PC-3 (cell line): ENCODE measurements at regions of chr2 and their contacts with region 1.

Region 1: GRCh38 chr2:55961318-55961911 is 37.8 kb upstream of the EFEMP1 start:
- DNase-seq: peak; percentile 75
- ATAC-seq: no peak
- H3K4me3 ChIP-seq: no peak overlapping the region
- H3K27ac ChIP-seq: no peak overlapping the region
- H3K4me1 ChIP-seq: peaks cover 35% of the 10 kb centered on the region
- H3K27me3 ChIP-seq: no peaks in the 10 kb centered on the region
- CTCF ChIP-seq: peak; percentile 88

Region 2: DNA sequence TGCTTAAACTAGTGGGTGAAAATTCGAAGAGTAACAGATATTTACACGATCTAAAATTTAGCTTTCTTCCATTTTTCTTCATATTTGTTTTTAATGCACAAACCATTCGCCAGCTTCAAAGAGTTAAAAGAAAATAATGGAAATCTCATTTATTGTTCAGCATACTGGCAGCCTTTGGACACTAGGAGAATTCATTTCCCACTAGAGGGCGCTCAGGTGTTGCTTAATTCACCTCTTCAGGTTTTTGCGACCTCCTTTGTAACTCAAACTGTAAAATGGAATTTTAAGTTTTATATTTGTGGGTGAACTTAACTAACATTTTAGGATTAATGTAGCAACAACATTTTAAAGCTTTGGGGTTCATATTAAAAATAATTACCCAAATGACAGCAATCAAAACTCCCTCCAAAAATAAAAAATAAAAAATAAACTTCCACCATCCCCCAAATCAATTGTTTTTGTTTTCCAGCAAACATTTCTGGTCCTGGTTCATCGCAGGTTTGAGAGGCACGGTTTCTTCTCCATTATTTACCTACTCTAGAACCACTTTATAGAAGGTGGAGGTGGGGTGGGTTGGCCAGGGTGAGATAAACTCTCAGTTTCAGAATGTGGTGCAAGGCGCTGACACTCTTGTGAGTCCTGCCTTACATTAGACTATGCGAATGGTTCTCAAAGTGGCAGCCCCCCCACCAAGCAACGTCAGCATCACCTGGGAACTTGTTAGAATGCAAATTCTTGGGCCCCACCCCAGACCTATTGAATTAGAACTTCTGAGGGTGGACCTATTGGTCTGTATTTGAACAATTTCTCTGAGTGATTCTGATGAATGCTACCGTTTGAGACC is 243.0 kb before region 1 on chr2:
- CTCF ChIA-PET with region 1: no interaction called
- POLR2A ChIA-PET with region 1: no interaction called
- intact Hi-C with region 1: loop called (anchors 1 kb)
- DNase-seq: peak; percentile 86
- ATAC-seq: peak; percentile 74
- H3K4me3 ChIP-seq: no peak overlapping the region
- H3K27ac ChIP-seq: no peak overlapping the region
- H3K4me1 ChIP-seq: peaks cover 22% of the 10 kb centered on the region
- H3K27me3 ChIP-seq: no peaks in the 10 kb centered on the region
- CTCF ChIP-seq: peak; percentile 93

Region 3: DNA sequence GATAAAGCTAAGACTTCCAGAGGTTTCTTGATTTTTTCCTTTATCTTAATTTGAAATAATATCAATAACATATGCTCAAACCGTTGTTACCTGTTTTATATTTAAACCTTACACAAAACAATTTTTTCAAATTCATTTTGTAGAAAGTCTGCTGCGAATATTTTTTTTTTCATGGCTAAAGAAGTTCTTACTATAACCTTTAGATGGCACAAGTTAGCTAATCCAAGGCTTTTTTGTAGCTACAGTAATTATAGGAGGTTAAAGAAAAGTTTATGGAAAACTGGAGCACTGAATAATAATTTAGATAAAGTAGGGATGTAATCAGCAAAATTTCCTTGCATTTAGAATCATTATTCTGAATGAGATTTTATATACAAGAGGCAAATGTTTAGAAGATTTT is 189.8 kb before region 1 on chr2:
- CTCF ChIA-PET with region 1: interaction called, 10 read pairs
- POLR2A ChIA-PET with region 1: no interaction called
- intact Hi-C with region 1: loop called (anchors 1 kb)
- DNase-seq: peak; percentile 71
- ATAC-seq: peak; percentile 54; the same call in 1 of the 2 replicates
- H3K4me3 ChIP-seq: no peak overlapping the region
- H3K27ac ChIP-seq: no peak overlapping the region
- H3K4me1 ChIP-seq: peaks cover 7% of the 10 kb centered on the region
- H3K27me3 ChIP-seq: no peaks in the 10 kb centered on the region
- CTCF ChIP-seq: peak; percentile 92

Region 4: DNA sequence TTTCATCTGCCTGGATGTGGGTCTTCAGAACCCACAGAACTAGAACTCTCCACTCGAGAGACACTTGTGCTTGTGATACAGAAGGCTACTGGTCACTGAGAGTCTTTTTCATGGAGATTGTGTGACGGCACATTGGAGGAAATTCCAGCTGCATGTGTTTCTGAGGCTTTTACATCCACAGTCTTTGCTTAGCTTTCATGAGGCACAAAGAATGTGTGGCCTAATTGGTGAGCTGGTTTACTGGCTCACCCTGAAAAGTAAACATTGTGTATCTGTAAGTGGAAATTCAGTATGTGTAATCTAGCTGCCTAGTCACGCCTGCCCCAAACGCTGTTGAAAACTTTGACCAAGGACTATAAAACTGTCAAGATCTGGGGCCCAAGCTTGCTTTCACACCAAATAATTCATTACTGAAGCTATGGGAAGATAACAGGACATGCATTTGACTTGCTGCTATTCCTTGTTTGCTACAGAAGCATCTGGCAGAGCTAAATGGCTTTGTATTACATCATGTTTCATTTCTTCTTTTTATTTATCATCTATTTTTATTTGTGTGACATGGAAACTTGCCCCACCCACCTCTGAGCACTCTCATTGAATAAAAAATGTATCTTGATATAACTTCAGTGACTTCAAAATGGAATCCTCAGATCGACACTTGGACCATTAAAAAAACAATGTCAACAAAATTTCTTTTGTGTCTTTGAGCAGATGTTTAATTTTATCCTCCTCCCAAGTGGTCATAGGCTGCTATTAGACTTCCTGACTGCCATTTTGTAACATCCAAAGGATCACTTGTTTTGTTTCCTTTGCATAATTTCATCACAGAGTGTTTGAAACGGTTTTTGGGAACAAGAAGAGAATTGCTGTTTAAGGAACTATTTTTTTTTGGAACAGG is 118.1 kb before region 1 on chr2:
- CTCF ChIA-PET with region 1: interaction called, 6 read pairs
- POLR2A ChIA-PET with region 1: no interaction called
- intact Hi-C with region 1: loop called (anchors 2 kb)
- DNase-seq: peak; percentile 94
- ATAC-seq: peak; percentile 77
- H3K4me3 ChIP-seq: no peak overlapping the region; the same call in 1 of the 2 replicates
- H3K27ac ChIP-seq: peak overlapping the region; percentile 95
- H3K4me1 ChIP-seq: peaks cover 64% of the 10 kb centered on the region
- H3K27me3 ChIP-seq: no peaks in the 10 kb centered on the region
- CTCF ChIP-seq: no peak

Region 5: GRCh38 chr2:55923091-55923981 is 38.1 kb before region 1 on chr2 and contains the start of gene EFEMP1:
- CTCF ChIA-PET with region 1: no interaction called
- POLR2A ChIA-PET with region 1: no interaction called
- intact Hi-C with region 1: loop called (anchors 5 kb)
- DNase-seq: peak; percentile 69
- ATAC-seq: peak; percentile 90
- H3K4me3 ChIP-seq: peak within 1 kb of the TSS; percentile 83
- H3K27ac ChIP-seq: no peak within 1 kb of the TSS
- H3K4me1 ChIP-seq: peaks cover 18% of the 10 kb centered on the region
- H3K27me3 ChIP-seq: no peaks in the 10 kb centered on the region
- CTCF ChIP-seq: peak; percentile 28; the same call in 1 of the 2 replicates
- total RNA-seq, gene EFEMP1: 52.0 and 59.6 TPM in 2 replicates

Region 6: DNA sequence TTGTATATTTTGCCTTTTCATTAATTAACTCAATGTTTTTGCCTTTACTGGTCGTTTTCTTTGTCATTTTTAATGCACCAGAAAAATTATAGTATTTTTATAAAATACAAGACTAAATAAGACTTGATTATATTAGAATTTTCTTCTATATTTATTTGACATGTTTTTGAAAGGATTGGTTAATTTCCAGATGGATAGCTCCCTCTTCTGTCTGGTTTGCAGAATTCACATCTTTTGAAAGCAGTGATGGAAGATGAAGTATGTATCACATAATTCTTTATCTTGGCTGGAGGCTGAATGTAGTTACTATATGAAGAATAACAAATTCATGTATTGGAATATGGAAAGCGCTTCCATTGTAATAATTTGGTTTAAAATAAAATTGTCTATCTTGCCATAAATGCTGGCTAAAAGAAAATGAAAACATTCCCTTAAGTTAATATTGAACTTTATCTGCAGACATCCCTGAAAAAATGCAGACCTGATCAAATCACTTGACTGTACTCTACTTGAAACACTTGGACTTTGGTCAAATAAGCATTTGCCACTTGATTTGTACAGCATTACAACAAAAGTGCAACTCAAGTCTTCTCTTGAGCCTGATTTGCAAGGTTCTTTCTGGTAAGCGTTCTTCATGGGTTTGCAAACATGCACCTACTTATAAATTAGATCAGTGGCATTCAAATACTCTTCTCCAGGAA is 48.5 kb after region 1 on chr2:
- CTCF ChIA-PET with region 1: no interaction called
- POLR2A ChIA-PET with region 1: no interaction called
- intact Hi-C with region 1: loop called (anchors 1 kb)
- DNase-seq: peak; percentile 72
- ATAC-seq: no peak
- H3K4me3 ChIP-seq: no peak overlapping the region
- H3K27ac ChIP-seq: no peak overlapping the region
- H3K4me1 ChIP-seq: peaks cover 10% of the 10 kb centered on the region; the same call in 1 of the 2 replicates
- H3K27me3 ChIP-seq: no peaks in the 10 kb centered on the region
- CTCF ChIP-seq: peak; percentile 73

Region 7: DNA sequence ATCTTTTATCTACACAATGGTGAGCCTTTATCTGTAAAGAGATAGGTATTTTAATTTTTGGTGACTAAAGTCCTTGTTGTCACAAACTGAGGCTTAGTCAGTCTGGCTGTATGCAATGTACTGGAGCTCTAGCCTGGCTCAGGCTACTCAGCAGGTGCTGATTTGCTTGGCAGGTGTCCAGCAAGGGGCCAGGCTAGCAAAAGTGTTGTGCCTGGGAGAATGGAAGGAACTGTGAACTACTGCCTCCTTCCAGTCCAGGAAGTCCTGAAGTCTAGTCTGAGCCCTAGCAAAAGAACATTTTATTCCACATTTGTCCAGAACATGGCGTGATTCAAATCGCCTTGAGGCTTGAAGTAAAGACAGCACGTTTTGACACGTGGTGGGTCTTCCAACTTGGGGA is 482.9 kb after region 1 on chr2:
- CTCF ChIA-PET with region 1: no interaction called
- POLR2A ChIA-PET with region 1: no interaction called
- intact Hi-C with region 1: no loop called
- DNase-seq: peak; percentile 48
- ATAC-seq: no peak
- H3K4me3 ChIP-seq: no peak overlapping the region
- H3K27ac ChIP-seq: no peak overlapping the region
- H3K4me1 ChIP-seq: peaks cover 13% of the 10 kb centered on the region; the same call in 1 of the 2 replicates
- H3K27me3 ChIP-seq: no peaks in the 10 kb centered on the region
- CTCF ChIP-seq: no peak

Region 8: DNA sequence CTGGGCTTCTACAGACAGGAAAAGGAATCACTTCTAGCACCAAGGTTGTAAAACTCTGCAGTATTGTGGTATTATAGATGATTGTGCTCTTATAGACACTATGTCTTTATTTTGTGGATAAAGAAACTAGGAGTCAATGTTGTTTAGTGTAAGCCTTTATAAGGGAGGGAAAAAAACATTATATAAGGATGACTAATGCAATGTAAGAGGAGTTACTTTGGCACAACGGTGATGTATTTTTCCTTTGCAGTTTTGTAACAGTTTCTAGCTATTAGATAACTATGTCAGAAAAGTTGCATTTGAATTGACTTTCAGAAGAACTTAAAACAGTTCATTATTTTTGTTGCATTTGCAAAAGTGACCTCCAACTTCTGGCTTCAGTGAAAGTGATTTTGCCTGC is 767.8 kb after region 1 on chr2:
- CTCF ChIA-PET with region 1: no interaction called
- POLR2A ChIA-PET with region 1: no interaction called
- intact Hi-C with region 1: no loop called
- DNase-seq: no peak
- ATAC-seq: peak; percentile 57
- H3K4me3 ChIP-seq: no peak overlapping the region
- H3K27ac ChIP-seq: no peak overlapping the region
- H3K4me1 ChIP-seq: 0 out of 2 replicates have a peak, but pooled peaks cover 7% of the 10 kb centered on the region
- H3K27me3 ChIP-seq: no peaks in the 10 kb centered on the region
- CTCF ChIP-seq: no peak